ENCODE measurements at regions of chr4 and their contacts with region 1.

Region 1: GRCh38 chr4:78938868-78939666 is at the start of gene PAQR3:
- DNase-seq: peak; percentile 82
- H3K4me3 Mint-ChIP-seq: peak within 1 kb of the TSS; percentile 97
- H3K27ac Mint-ChIP-seq: peak within 1 kb of the TSS; percentile 88
- H3K4me1 Mint-ChIP-seq: peaks cover 47% of the 10 kb centered on the region
- H3K27me3 Mint-ChIP-seq: peaks cover 16% of the 10 kb centered on the region
- total RNA-seq, gene PAQR3: 19.6 and 19.8 TPM in 2 replicates

Region 2: DNA sequence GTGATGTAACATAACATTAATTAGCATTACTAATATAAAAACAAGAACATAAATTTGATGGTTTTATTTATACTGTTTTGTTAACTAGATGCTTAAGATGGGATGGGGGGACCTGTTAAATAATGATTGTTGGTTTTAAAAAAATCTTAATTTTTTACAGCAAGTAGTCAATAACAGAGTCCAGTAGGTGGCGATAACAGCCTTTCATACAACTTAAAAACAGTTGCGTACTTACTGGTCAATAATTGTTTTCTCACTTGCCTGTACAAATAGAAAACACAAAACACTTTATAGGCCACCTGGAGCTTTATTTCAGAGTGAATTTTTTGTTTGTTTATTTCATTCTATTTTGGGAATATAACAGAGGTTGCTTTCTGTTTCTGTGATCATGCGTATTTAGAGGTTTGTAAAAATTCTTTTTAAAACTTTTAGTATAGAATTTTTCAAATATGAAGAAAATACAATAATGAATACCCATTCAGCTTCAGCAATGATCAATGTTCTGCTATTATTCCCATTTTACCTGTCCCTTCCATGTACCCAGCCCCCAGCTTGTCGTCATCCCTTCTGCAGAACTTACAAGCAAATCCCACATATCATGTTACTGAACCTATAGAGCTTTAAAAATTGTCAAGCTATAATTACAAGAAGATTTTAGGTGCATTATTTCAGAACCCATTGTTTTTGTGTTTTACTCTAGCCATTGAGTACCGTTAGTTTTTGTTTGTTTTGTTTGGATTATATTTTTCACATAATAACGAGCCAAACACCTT is 979.3 kb before region 1 on chr4:
- intact Hi-C with region 1: loop called (anchors 5 kb)
- DNase-seq: no peak
- H3K4me3 Mint-ChIP-seq: no peak overlapping the region
- H3K27ac Mint-ChIP-seq: no peak overlapping the region
- H3K4me1 Mint-ChIP-seq: no peaks in the 10 kb centered on the region
- H3K27me3 Mint-ChIP-seq: peaks cover under 1% of the 10 kb centered on the region

Region 3: DNA sequence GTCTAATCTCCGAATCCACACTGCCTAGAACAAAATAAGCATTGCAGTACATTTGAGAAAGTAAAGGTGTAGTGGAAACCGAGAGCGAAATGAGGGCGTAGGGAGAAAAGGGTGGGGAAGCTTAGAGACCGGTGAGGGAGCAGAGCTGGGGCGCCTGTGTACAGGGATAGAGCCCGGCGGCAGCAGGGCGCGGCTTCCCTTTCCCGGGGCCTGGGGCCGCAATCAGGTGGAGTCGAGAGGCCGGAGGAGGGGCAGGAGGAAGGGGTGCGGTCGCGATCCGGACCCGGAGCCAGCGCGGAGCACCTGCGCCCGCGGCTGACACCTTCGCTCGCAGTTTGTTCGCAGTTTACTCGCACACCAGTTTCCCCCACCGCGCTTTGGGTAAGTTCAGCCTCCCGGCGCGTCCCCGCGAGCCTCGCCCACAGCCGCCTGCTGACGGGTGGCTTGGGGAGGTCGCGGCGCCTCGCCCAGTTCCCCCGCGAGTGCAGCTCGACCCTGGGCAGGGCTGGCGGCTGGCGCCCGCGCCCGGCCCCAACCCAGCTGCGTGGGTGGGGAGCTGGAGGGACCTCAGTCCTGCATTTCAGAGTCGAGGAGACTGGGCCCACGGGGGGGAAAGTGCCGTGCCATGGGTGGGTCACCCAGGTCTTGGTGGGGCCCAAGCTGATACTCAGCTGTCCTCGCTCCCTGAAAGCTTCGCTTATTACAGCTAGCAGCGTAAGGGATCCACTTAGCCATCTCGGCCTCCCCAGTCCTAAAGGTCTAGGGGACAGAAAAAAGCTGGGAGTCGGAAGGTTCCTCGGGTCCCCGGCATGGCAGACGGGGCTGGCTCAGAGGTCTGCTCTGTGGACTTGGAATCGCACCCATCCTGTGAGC is 387.4 kb before region 1 on chr4 and contains the start of gene ANXA3:
- intact Hi-C with region 1: loop called (anchors 5 kb)
- DNase-seq: peak; percentile 25
- H3K4me3 Mint-ChIP-seq: peak within 1 kb of the TSS; percentile 90
- H3K27ac Mint-ChIP-seq: peak within 1 kb of the TSS; percentile 73
- H3K4me1 Mint-ChIP-seq: peaks cover 29% of the 10 kb centered on the region
- H3K27me3 Mint-ChIP-seq: peaks cover 18% of the 10 kb centered on the region
- total RNA-seq, gene ANXA3: 8.1 and 9.2 TPM in 2 replicates

Region 4: GRCh38 chr4:78612398-78613178 is 326.5 kb before region 1 on chr4:
- intact Hi-C with region 1: loop called (anchors 2 kb)
- DNase-seq: no peak
- H3K4me3 Mint-ChIP-seq: no peak overlapping the region
- H3K27ac Mint-ChIP-seq: no peak overlapping the region
- H3K4me1 Mint-ChIP-seq: peaks cover 61% of the 10 kb centered on the region
- H3K27me3 Mint-ChIP-seq: no peaks in the 10 kb centered on the region

Region 5: GRCh38 chr4:78990938-78991810 is 52.1 kb after region 1 on chr4:
- intact Hi-C with region 1: no loop called
- DNase-seq: no peak
- H3K4me3 Mint-ChIP-seq: no peak overlapping the region
- H3K27ac Mint-ChIP-seq: no peak overlapping the region
- H3K4me1 Mint-ChIP-seq: no peaks in the 10 kb centered on the region
- H3K27me3 Mint-ChIP-seq: peaks cover 2% of the 10 kb centered on the region

Region 6: GRCh38 chr4:79996851-79997250 is 1057.8 kb after region 1 on chr4:
- intact Hi-C with region 1: loop called (anchors 10 kb)
- DNase-seq: no peak
- H3K4me3 Mint-ChIP-seq: no peak overlapping the region
- H3K27ac Mint-ChIP-seq: no peak overlapping the region
- H3K4me1 Mint-ChIP-seq: peaks cover 34% of the 10 kb centered on the region
- H3K27me3 Mint-ChIP-seq: no peaks in the 10 kb centered on the region

Region 7: GRCh38 chr4:80202190-80202711 is 1263.2 kb after region 1 on chr4:
- intact Hi-C with region 1: loop called (anchors 5 kb)
- DNase-seq: peak; percentile 79
- H3K4me3 Mint-ChIP-seq: peak overlapping the region; percentile 80
- H3K27ac Mint-ChIP-seq: peak overlapping the region; percentile 73
- H3K4me1 Mint-ChIP-seq: peaks cover 29% of the 10 kb centered on the region
- H3K27me3 Mint-ChIP-seq: peaks cover 21% of the 10 kb centered on the region

Region 8: GRCh38 chr4:80540785-80541469 is 1601.9 kb after region 1 on chr4:
- intact Hi-C with region 1: loop called (anchors 2 kb)
- DNase-seq: no peak
- H3K4me3 Mint-ChIP-seq: no peak overlapping the region
- H3K27ac Mint-ChIP-seq: no peak overlapping the region
- H3K4me1 Mint-ChIP-seq: peaks cover 5% of the 10 kb centered on the region
- H3K27me3 Mint-ChIP-seq: peaks cover 11% of the 10 kb centered on the region

Measured in activated T-helper 1 cell treated with anti-CD3 and anti-CD28 coated beads, Interleukin-12 subunit alpha, Interleukin-12 subunit beta, Interleukin-2, Interleukin-4 antibody, amounts not matched to agents 30 ng/mL and 10 ng/mL and 1 ng/mL, durations not matched to agents 14 hours and 24 hours and 36 hours (primary cell).